CD8-positive, alpha-beta T cell (primary cell): ENCODE measurements at regions of chr6 and their contacts with region 1.

Region 1: DNA sequence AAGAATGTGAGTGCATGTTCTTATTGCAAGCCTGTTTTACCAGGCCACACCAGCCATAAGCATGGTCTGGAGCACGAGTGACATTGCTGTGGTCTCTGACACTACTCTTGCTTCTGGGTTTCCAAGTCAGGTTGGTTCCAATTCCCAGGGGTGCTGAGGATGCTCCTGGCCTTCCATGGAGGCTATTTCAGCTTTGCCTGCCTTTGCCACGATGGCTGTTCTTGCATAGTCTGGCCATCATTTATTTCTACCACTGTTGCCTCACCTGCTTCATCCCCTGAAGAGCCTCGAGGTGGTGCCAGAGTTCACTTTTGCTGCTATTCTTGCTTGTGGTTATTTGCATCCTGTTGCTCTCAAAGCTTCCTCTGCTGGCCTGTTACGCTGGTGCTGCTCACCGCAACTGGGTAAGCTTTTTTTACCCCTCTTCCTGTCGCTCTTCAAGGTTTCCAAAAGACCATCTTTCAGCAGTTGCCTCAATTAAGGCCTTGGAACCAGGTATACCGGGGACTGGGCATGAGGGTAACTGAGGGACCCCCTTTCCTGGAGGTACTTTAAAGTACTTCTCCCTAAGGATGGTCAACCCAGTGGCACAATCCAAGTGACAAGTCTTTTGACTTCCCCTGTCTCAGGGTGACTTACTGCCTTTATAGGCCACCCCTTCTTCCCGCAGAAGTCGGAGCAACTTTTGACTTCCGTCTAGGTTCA is 64.5 kb downstream of the AKAP7 start:
- DNase-seq: peak; percentile 51 to 95 (median 71)
- ATAC-seq: peak; percentile 95
- H3K4me3 ChIP-seq: peak overlapping the region; percentile 31 to 35
- H3K4me3 Mint-ChIP-seq: peak overlapping the region; percentile 80
- H3K27ac ChIP-seq: peak overlapping the region; percentile 73 to 81
- H3K27ac Mint-ChIP-seq: peak overlapping the region; percentile 97
- H3K4me1 ChIP-seq: peaks cover 58% of the 10 kb centered on the region
- H3K4me1 Mint-ChIP-seq: peaks cover 61% of the 10 kb centered on the region
- H3K27me3 ChIP-seq: no peaks in the 10 kb centered on the region
- H3K27me3 Mint-ChIP-seq: no peaks in the 10 kb centered on the region
- CTCF ChIP-seq: peak; percentile 83

Region 2: DNA sequence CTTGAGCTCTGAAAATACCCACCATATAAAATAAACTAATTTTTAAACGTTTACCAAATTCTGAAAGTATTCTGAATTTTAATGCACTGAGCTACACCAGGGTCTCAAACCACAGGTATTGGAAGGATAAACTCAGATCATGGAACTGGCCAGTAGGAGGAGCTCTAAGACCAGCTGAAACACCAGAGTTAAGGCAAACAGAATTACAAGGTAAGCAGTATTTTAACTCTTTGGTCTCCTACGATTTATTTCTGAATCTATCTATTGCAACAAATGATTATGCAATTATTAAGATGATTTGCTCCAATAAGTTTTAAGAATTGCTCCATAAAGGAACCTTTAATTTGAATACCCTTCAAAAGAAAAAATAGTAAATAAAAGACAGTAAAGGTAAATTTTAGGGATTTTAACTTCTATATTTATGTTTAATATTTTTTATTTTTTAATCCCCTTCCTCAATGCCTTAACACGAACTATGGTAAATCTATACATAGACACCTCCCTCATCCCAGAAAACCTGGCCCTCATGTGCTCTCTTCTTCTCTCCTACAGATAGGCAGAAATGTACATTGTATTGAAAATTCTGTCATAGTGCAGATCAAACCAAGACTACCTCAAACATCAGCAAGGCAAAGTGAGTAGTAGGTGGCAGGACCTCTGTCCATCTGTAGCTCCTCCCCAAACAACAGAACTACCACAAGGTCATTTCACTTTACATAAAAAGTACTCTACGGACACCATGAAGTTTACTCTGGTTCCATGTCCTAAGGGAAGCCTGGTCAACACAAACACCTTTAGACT is 314.1 kb before region 1 on chr6:
- CTCF ChIA-PET with region 1: interaction called, 9 read pairs
- POLR2A ChIA-PET with region 1: no interaction called
- intact Hi-C with region 1: loop called (anchors 2 to 5 kb)
- DNase-seq: peak; percentile 50 to 86 (median 73)
- ATAC-seq: peak; percentile 91
- H3K4me3 ChIP-seq: no peak overlapping the region
- H3K4me3 Mint-ChIP-seq: no peak overlapping the region
- H3K27ac ChIP-seq: no peak overlapping the region
- H3K27ac Mint-ChIP-seq: no peak overlapping the region
- H3K4me1 ChIP-seq: no peaks in the 10 kb centered on the region
- H3K4me1 Mint-ChIP-seq: no peaks in the 10 kb centered on the region
- H3K27me3 ChIP-seq: no peaks in the 10 kb centered on the region
- H3K27me3 Mint-ChIP-seq: no peaks in the 10 kb centered on the region
- CTCF ChIP-seq: peak; percentile 97

Region 3: DNA sequence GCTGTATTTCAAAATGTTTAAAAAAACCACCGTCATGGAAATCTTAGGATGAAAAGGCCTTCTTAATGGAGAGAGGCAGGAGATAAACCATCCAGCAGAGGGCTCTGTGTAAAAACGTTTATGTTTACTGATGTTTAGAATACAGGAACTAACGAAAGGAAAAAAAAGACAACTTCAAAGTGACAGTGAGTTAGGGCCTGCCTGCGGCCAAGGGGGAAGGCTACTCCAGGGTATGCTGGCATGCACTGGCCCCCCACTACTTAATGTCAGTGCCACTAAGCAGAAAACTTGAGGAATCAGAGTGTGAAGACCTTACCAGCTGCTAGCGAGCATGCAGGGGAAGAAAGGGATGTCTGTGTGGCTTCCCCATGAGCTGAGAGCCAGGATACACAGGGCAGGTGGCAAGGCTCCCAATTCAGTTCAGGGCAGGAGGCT is 16.7 kb before region 1 on chr6:
- CTCF ChIA-PET with region 1: interaction called, 42 read pairs
- POLR2A ChIA-PET with region 1: interaction called, 13 read pairs
- intact Hi-C with region 1: loop called in 1 of 2 experiments (anchors 1 kb)
- DNase-seq: peak in 6 of 9 experiments; percentile 9 to 68 (median 40)
- ATAC-seq: peak; percentile 66
- H3K4me3 ChIP-seq: no peak overlapping the region
- H3K4me3 Mint-ChIP-seq: peak overlapping the region; percentile 69
- H3K27ac ChIP-seq: peak overlapping the region in 1 of 2 experiments; percentile 23
- H3K27ac Mint-ChIP-seq: peak overlapping the region; percentile 89
- H3K4me1 ChIP-seq: peaks cover 11% of the 10 kb centered on the region
- H3K4me1 Mint-ChIP-seq: peaks cover 13% of the 10 kb centered on the region
- H3K27me3 ChIP-seq: no peaks in the 10 kb centered on the region
- H3K27me3 Mint-ChIP-seq: no peaks in the 10 kb centered on the region
- CTCF ChIP-seq: peak; percentile 63

Region 4: DNA sequence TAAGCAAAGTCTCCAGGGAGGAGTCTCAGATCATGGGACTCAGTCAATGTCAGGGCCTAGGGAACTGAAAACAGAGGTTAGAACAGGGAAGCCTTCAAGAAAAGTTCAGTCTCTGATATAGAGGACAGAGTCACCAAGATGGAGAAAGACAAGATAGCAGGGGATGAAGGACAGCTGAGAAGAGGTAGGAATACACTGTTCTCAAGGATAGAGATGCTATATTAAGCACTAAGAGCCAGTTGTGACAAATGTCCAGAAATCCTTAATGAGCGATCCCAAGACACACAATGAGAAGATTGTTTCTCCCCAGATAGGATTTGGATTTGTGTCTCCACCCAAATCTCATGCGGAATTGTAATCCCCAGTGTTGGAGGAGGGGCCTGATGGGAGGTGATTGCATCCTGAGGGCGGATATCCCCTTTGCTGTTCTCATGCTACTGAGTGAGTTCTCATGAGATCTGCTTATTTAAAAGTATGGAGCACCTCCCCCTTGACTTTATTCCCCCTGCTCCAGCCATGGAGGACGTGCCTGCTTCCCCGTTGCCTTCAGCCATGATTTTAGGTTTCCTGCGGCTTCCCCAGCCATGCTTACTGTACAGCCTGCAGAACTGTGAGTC is 103.7 kb after region 1 on chr6:
- CTCF ChIA-PET with region 1: no interaction called
- POLR2A ChIA-PET with region 1: interaction called, 5 read pairs
- intact Hi-C with region 1: loop called in 1 of 2 experiments (anchors 1 kb)
- DNase-seq: no peak
- ATAC-seq: no peak
- H3K4me3 ChIP-seq: no peak overlapping the region
- H3K4me3 Mint-ChIP-seq: no peak overlapping the region
- H3K27ac ChIP-seq: no peak overlapping the region
- H3K27ac Mint-ChIP-seq: no peak overlapping the region
- H3K4me1 ChIP-seq: no peaks in the 10 kb centered on the region
- H3K4me1 Mint-ChIP-seq: peaks cover 18% of the 10 kb centered on the region
- H3K27me3 ChIP-seq: no peaks in the 10 kb centered on the region
- H3K27me3 Mint-ChIP-seq: no peaks in the 10 kb centered on the region
- CTCF ChIP-seq: no peak

Region 5: GRCh38 chr6:131519670-131520436 is 320.1 kb after region 1 on chr6:
- CTCF ChIA-PET with region 1: interaction called, 19 read pairs
- POLR2A ChIA-PET with region 1: interaction called, 7 read pairs
- intact Hi-C with region 1: loop called in 1 of 2 experiments (anchors 5 kb)
- DNase-seq: peak in 7 of 9 experiments; percentile 22 to 72 (median 48)
- ATAC-seq: peak; percentile 97
- H3K4me3 ChIP-seq: no peak overlapping the region
- H3K4me3 Mint-ChIP-seq: no peak overlapping the region
- H3K27ac ChIP-seq: no peak overlapping the region
- H3K27ac Mint-ChIP-seq: no peak overlapping the region
- H3K4me1 ChIP-seq: peaks cover 13% of the 10 kb centered on the region
- H3K4me1 Mint-ChIP-seq: peaks cover 17% of the 10 kb centered on the region
- H3K27me3 ChIP-seq: no peaks in the 10 kb centered on the region
- H3K27me3 Mint-ChIP-seq: no peaks in the 10 kb centered on the region
- CTCF ChIP-seq: peak; percentile 71

Region 6: GRCh38 chr6:131627724-131628682 is 428.3 kb after region 1 on chr6 and contains the start of gene MED23:
- CTCF ChIA-PET with region 1: interaction called, 13 read pairs
- POLR2A ChIA-PET with region 1: interaction called, 5 read pairs
- intact Hi-C with region 1: loop called (anchors 1 kb)
- DNase-seq: peak; percentile 92 to 99 (median 95)
- ATAC-seq: peak; percentile 94
- H3K4me3 ChIP-seq: peak within 1 kb of the TSS; percentile 83 to 86
- H3K4me3 Mint-ChIP-seq: peak within 1 kb of the TSS; percentile 98
- H3K27ac ChIP-seq: peak within 1 kb of the TSS; percentile 62 to 72
- H3K27ac Mint-ChIP-seq: peak within 1 kb of the TSS; percentile 94
- H3K4me1 ChIP-seq: peaks cover 18% of the 10 kb centered on the region
- H3K4me1 Mint-ChIP-seq: peaks cover 32% of the 10 kb centered on the region
- H3K27me3 ChIP-seq: no peaks in the 10 kb centered on the region
- H3K27me3 Mint-ChIP-seq: no peaks in the 10 kb centered on the region
- CTCF ChIP-seq: peak; percentile 95
- total RNA-seq, gene MED23: 65.3 to 70.0 TPM